Cardiac septum (tissue), 1 donor: ENCODE measurements at regions of chr2 and their contacts with region 1.

Region 1: GRCh38 chr2:165874445-165875039 is 79.0 kb downstream of the TTC21B start:
- DNase-seq: no peak

Region 2: GRCh38 chr2:165239230-165239629 is 635.3 kb before region 1 on chr2 and contains the start of gene SCN2A:
- intact Hi-C with region 1: loop called (anchors 10 kb)
- DNase-seq: no peak
- total RNA-seq, gene SCN2A: 0.13 TPM

Region 3: GRCh38 chr2:165610591-165611029 is 263.9 kb before region 1 on chr2:
- intact Hi-C with region 1: no loop called
- DNase-seq: no peak

Region 4: DNA sequence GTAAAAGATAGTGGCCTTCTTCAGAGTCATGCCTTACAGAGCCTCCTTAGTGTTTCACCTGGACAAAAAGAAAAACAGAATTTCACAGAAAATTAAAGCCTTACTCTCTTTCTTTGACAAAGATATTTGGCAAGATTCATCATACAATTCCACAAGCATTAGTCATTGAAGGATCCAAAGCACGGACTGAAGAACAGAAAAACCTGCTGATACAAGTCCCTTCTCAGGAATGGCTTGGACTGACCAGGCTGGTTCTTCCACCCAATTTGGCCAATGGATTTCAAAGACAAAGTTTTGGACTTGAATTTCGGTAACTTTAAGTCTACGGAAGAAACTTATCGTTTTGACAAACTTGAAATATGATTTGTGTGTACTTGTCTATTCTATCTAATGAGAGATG is 41.4 kb before region 1 on chr2:
- intact Hi-C with region 1: no loop called
- DNase-seq: no peak